A673 (cell line): ENCODE measurements at regions of chr13 and their contacts with region 1.

Region 1: GRCh38 chr13:94233401-94233800 is 246.1 kb downstream of the DCT start:
- DNase-seq: peak; percentile 76
- H3K4me3 ChIP-seq: no peak overlapping the region
- H3K27ac ChIP-seq: no peak overlapping the region
- H3K4me1 ChIP-seq: peaks cover 45% of the 10 kb centered on the region
- H3K27me3 ChIP-seq: no peaks in the 10 kb centered on the region
- CTCF ChIP-seq: no peak

Region 2: DNA sequence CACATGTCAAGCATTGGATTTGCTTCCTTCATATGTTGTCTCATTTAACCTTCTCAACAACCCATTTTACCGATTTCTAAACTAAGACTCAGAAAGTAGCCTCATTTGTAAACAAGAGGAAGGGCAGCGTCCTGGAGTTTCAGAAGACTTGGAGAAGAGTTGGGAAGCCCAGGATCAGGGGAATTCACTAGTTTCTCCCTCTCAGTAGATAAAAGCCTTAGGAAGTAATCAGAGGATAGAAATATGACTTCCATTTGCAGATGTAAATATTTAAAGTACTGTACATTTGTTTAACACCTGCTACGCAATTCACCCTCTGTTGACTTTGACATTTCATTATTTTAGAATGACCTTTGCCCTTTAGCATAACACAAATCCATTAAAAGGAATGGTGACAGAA is 29.6 kb after region 1 on chr13:
- CTCF ChIA-PET with region 1: no interaction called
- POLR2A ChIA-PET with region 1: interaction called, 11 read pairs
- intact Hi-C with region 1: no loop called
- DNase-seq: no peak
- H3K4me3 ChIP-seq: no peak overlapping the region
- H3K27ac ChIP-seq: no peak overlapping the region
- H3K4me1 ChIP-seq: no peaks in the 10 kb centered on the region
- H3K27me3 ChIP-seq: no peaks in the 10 kb centered on the region
- CTCF ChIP-seq: no peak